AG04449 (cell line): ENCODE measurements at regions of chr2 and their contacts with region 1.

Region 1: DNA sequence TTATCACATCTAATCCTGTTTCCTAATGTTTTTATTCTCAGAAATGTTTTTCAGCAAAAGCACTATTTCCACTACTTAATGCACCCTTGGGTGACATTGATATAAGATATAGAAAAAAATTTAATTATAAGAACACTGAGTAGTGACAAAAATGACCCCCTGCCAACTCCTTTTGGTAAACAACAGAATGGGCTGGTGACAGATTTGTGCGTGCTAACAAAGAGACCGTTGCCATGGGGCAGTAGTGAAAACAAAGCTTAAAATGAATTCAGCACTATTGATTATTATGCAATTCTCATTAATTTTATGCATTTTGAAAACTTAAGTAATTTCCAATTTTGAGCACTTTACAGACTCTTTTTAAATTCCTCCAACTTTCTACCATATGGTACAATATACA is 33.1 kb downstream of the RDH14 start:
- DNase-seq: no peak
- H3K4me3 ChIP-seq: no peak overlapping the region
- CTCF ChIP-seq: no peak

Region 2: DNA sequence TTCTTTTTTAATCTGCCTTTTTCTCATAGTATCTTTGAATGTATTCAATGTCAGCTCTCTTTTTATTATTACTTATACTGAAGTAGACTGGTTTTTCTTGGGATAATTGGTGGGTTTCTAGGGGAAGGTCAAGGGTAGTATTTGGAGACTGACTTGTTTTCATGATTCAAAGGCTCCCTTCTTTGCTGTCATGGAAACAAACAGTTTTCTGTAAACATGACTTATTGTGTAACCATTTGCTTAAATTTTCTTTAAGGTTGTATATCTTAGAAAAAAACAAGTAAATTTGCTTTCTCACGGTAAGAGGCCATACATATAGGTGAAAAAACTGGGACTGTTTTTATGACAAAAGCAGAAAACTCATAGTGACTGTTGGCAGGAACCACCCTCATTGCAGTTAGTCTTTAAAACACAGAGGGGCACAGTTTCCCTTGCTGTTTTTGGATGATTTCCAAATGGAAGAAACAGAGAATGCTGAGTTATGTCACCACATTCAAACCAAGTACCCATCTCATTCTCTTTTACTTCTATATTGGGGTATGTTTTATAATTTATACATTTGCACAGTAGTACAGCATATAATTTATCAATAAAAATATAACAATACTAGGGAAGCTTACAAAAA is 38.9 kb after region 1 on chr2:
- CTCF ChIA-PET with region 1: no interaction called
- POLR2A ChIA-PET with region 1: no interaction called
- DNase-seq: no peak
- H3K4me3 ChIP-seq: no peak overlapping the region
- CTCF ChIP-seq: no peak

Region 3: GRCh38 chr2:18749912-18750526 is 222.7 kb after region 1 on chr2:
- CTCF ChIA-PET with region 1: interaction called, 126 read pairs
- POLR2A ChIA-PET with region 1: no interaction called
- DNase-seq: no peak
- H3K4me3 ChIP-seq: no peak overlapping the region
- CTCF ChIP-seq: peak; percentile 59